Aorta (tissue), 5 donors: ENCODE measurements at regions of chr5 and their contacts with region 1.

Region 1: DNA sequence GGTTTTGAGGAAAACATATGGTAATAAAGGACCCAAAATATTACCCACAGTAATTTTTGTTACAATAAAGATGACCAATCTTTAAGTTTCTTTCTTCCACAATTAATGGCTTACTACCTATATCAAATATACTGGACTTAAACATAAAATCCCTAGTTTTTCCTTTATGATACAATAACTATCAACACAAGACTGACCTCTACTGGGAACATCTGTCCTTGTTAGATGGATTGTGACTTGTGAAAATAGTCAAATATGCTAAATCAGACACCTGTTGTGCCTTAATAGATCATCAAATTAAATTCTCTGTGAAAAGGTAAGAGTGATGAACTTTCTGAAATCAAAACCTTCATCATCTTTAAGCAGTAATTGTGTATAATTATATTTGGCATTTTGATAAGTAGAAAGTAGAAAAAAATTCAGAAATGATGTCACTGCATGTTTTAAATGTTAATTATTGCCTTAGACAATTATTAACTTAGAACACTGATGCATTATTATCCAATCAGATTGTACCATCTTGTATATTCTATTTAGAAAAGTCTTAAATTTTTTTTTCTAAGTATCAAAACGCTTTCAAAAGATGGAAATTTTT is 113.6 kb downstream of the DEPDC1B start:
- DNase-seq: no peak
- ATAC-seq: no peak
- H3K4me3 ChIP-seq: no peak overlapping the region
- H3K27ac ChIP-seq: no peak overlapping the region
- H3K4me1 ChIP-seq: no peaks in the 10 kb centered on the region
- H3K27me3 ChIP-seq: no peaks in the 10 kb centered on the region

Region 2: DNA sequence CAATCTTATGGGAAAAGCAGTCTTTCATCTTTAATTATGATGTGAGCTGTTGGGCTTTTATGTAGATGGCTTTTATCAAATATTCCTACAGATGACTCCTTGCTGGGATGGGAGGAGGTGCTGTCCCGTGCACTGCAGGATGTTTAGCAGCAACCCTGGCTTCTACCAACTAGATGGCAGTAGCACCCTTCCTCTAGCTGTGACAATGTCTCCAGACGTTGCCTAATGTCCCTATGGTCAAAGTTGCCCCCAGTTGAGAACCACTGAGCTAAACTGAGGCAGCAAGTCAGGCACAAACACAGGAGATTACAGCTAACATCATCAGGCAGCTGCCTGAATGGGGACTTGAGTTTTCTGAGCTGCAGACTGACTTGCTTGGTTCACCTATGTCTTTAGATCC is 291.0 kb before region 1 on chr5:
- intact Hi-C with region 1: loop called in 1 of 2 experiments (anchors 5 kb)
- DNase-seq: peak in 1 of 2 donors; percentile 63
- ATAC-seq: no peak
- H3K4me3 ChIP-seq: no peak overlapping the region
- H3K27ac ChIP-seq: no peak overlapping the region
- H3K4me1 ChIP-seq: no peaks in the 10 kb centered on the region
- H3K27me3 ChIP-seq: no peaks in the 10 kb centered on the region

Region 3: DNA sequence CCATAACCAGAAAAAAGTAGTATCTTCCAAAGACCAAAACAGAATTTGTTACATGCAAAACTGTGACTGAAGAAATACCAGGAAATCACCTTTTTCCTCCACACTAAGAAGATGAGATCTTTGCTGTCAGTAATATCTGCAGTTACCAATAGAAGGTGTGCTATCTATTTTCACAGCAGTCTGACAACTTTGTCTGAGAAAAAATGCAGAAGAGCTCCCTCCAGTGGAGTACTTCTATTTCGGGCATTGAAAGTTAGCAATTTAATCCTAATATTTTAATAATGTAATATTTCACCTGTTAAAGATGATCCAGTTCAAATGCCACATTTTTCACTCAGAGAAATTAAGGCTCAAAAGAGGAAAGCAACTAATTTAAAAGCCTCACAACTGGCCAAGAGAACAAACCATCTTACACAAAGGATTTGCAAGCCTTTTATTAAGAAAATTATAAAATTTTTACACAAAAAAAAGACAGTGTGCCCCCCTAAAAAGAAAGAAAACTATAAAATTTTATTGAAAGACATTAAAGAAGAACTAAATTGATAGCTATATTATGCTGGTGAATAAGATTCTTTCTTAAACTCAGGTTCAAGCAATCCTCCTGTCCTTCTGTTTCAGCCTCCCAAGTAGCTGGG is 63.0 kb after region 1 on chr5:
- intact Hi-C with region 1: loop called in 1 of 2 experiments (anchors 10 kb)
- DNase-seq: no peak
- ATAC-seq: no peak
- H3K4me3 ChIP-seq: no peak overlapping the region
- H3K27ac ChIP-seq: no peak overlapping the region
- H3K4me1 ChIP-seq: peaks cover 0 to 4% of the 10 kb centered on the region in 2 donors
- H3K27me3 ChIP-seq: no peaks in the 10 kb centered on the region

Region 4: GRCh38 chr5:60856066-60856465 is 269.7 kb after region 1 on chr5:
- intact Hi-C with region 1: no loop called
- DNase-seq: no peak
- ATAC-seq: no peak
- H3K4me3 ChIP-seq: no peak overlapping the region
- H3K27ac ChIP-seq: no peak overlapping the region
- H3K4me1 ChIP-seq: no peaks in the 10 kb centered on the region
- H3K27me3 ChIP-seq: peaks cover 0 to 2% of the 10 kb centered on the region in 2 donors